ENCODE measurements at regions of chr18 and their contacts with region 1.

Region 1: DNA sequence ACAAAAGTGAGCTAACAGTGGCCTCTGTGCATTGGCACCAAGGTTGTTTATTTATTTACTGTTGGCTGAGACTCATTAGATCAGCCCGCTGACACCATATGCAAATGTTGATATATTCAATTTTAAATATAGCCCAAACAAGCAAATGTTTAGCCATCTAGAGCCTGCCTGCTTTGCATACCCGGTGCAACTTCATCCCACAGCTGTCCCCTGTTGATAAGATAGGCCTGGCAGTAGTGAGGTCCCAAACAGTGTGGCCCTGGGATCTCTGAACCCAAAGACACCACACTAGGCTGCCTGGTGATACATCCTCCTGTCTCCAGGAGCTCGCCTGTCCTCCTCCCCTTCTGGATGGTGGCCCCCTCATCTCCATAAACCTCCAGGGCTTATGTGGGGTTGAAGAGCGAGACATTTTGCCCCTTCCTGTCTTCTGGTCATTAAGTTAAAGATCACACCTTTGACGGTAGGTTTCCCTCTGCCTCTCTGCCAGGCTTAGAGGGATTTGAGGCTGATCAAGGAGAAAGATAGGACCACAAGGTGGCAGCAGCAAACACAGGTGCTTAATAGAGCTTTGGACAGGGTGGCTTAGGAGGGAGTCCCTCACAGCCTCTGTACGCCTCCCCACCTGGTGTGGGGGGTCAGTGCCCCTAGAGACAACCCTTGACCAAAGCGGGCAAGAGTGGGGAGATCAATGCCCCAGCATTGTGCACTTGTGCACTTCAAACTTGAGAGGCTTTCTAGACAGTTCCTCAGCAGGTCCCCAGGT is 23.7 kb upstream of the MYO5B start:
- DNase-seq: peak; percentile 22 to 35
- H3K4me3 ChIP-seq: no peak overlapping the region
- H3K4me1 ChIP-seq: no peaks in the 10 kb centered on the region
- H3K27me3 ChIP-seq: peaks cover 13% of the 10 kb centered on the region

Region 2: DNA sequence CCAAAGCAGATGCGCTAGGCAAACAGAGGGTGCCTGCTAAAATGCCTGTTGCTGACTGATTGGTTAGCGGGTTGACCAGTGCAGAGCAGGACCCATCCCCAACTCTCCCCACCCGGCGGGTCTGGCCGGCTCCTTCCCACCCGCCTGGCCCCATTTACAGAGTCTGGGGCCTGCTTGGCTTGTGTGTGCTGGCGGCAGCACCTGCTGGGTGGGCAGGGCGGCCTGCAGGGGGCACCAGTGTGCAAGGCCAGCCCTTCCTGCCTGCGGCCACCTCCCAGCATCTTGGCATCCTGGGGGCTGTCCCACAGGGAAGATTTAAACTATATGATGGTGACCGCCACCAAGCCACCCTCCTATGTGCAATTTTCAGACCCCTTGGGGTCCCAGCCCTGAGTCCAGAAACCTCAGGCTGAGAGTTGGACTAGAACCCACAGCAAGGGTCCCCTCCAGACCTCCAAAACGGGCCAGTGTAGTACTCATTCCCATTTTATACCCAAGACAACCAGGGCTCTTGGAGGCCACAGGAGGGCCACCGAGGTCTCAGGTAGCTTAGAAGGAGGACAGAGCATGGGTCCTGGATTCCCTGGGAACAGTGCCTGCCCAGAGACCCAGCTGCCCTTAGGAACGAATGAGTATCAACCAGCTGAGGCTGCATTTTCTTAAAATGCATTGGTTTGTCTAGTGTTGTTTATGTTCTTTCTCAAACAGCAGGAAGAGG is 1441.4 kb before region 1 on chr18:
- in situ Hi-C with region 1: no loop called
- DNase-seq: peak; percentile 40 to 78
- H3K4me3 ChIP-seq: no peak overlapping the region
- H3K4me1 ChIP-seq: no peaks in the 10 kb centered on the region
- H3K27me3 ChIP-seq: no peaks in the 10 kb centered on the region

Region 3: GRCh38 chr18:50350699-50351098 is 132.1 kb after region 1 on chr18:
- in situ Hi-C with region 1: loop called (anchors 5 kb)
- DNase-seq: no peak
- H3K4me3 ChIP-seq: no peak overlapping the region
- H3K4me1 ChIP-seq: no peaks in the 10 kb centered on the region; the same call in 1 of the 2 replicates
- H3K27me3 ChIP-seq: no peaks in the 10 kb centered on the region